Activated CD4-positive, alpha-beta memory T cell treated with anti-CD3 and anti-CD28 coated beads, Interleukin-2, amount 10 ng/mL, durations not matched to agents 7 days and 5 days (primary cell): ENCODE measurements at regions of chr22 and their contacts with region 1.

Region 1: DNA sequence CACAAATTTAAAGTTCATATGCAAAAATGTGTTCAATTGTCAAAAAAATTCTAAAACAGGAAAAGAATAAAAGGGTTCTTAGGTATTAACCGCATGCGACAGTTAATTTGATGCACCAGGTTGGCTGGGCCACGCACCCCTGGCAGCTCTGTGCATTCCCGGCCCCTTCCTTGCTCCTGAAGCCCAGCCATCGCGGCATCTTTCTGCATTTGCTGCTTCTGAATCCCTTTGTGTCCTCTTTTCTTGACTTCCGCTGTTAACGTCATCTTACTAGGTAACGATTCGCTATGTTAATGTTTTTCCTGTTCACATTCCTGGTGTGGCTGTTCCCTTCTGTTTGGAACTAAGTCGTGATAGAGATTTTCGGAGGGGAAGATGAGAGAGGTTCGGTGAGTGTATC is 7.9 kb upstream of the KLHDC7B start:
- DNase-seq: no peak
- H3K4me3 Mint-ChIP-seq: peak overlapping the region; percentile 33
- H3K27ac Mint-ChIP-seq: peak overlapping the region; percentile 99
- H3K4me1 Mint-ChIP-seq: peaks cover 83% of the 10 kb centered on the region
- H3K27me3 Mint-ChIP-seq: no peaks in the 10 kb centered on the region

Region 2: DNA sequence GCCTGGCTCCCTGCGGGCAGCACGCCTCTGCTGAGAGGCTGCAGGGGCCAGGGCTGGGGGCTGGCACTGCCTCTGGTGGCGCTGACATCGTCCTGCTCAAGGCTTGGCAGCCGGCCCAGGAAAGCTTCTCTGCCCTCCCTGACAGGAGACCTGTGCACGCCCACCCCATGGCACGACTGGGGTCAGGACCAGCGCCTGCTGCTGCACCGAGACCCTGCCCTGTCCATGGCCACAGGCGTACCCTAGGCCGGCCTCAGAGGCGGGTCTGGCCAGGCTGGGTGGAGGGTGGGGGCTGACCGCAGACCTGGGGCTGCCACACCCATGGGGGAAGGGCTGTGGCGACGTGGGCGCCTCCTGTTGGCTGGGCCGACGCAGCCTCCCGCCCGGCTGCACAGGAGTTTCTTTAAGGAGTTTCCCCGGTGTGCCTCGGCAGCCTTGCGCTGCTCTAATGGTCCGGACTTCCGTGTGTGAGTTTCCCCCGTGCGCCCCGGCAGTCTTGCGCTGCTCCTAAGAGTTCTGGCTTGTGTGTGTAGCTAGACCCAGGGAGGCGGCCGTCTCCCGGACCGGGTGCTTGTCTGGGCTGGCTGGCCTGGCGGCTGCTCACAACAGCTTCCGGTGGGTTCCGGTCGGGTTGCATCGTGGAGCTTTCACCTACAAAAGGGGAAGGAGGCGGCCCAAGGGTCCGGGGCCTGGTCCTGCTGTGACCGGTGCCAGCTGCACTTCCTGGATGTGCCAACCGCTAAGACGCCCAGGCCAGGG is 347.4 kb before region 1 on chr22:
- CTCF ChIA-PET with region 1: no interaction called
- POLR2A ChIA-PET with region 1: interaction called, 11 read pairs
- DNase-seq: peak; percentile 87
- H3K4me3 Mint-ChIP-seq: peak overlapping the region; percentile 79
- H3K27ac Mint-ChIP-seq: peak overlapping the region; percentile 95
- H3K4me1 Mint-ChIP-seq: peaks cover 57% of the 10 kb centered on the region
- H3K27me3 Mint-ChIP-seq: no peaks in the 10 kb centered on the region

Region 3: DNA sequence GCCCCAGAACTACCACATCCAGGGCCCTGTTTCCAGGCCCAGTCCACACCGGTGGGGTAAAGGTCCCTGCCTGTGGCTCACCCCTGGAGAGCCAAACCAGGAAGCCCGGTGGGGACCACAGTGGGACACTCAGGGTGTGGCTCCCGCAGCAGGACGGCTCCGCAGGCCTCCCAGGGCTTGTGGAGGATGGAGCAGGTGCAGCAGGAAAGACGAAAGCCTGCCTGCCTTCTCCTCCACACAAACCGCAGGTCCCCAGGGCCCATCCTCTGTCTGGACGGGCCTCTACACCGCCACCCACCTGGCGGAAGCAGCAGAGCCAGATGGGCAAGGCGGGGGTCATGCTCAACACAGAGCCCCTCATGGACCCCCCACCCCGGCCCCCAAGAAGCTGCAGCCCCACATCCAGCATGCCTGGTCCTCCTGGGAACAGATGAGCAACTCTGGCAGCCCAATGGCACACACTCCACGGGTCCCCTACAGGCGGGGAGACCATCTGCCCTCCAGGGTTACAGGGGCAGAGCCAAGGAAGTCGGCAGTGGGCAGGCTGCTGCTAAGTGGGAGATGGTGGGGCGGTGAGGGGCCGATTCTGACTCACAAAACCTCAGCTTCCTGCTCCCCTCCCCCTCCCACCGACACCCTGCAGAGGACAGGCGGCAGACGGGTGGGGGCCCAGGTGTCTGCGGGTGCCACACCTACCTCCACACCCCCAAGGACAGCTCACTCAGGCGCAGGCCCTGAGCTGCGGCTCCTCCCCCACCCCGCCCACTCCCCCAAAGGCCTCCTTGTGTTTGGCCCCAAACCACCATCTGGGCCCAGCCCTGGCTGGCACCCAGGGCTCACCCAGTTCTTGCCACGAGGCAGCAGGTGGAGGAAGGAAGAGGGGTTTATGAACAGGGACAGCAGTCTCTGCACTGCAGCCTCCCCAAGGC is 68.1 kb before region 1 on chr22:
- CTCF ChIA-PET with region 1: interaction called, 3 read pairs
- POLR2A ChIA-PET with region 1: interaction called, 16 read pairs
- DNase-seq: peak; percentile 99
- H3K4me3 Mint-ChIP-seq: peak overlapping the region; percentile 68
- H3K27ac Mint-ChIP-seq: peak overlapping the region; percentile 97
- H3K4me1 Mint-ChIP-seq: peaks cover 67% of the 10 kb centered on the region
- H3K27me3 Mint-ChIP-seq: no peaks in the 10 kb centered on the region

Region 4: DNA sequence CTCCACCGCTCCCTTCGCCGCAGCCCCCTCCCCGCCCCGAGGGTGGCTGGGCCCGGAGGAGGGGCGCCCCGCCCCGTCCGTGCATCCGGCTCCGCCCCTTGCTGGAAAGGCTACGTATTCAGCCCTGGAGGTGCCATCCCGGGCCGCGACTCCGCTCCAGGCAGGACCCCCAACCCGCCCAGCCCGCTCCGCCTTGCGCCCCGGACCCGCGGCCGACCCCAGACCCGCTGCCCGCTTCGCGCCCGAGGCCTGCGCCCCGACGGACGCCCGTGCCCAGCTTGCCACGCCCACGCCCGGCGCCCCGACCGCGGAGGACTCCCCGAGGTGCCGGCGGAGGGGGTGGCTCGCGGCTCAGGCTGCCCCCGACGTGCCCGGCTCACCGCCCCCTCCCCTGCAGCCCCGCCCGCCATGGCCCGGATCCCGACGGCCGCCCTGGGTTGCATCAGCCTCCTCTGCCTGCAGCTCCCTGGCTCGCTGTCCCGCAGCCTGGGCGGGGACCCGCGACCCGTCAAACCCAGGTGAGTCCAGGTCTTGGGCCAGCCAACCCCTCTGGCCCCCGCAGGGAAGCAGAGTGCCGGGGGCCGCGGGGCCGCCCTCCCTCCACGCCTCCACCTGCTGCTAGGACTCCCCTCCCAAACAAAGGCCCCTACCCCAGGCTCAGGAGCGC is 56.2 kb before region 1 on chr22 and contains the start of gene ADM2:
- CTCF ChIA-PET with region 1: no interaction called
- POLR2A ChIA-PET with region 1: no interaction called
- DNase-seq: peak; percentile 75
- H3K4me3 Mint-ChIP-seq: peak within 1 kb of the TSS; percentile 76
- H3K27ac Mint-ChIP-seq: no peak within 1 kb of the TSS
- H3K4me1 Mint-ChIP-seq: peaks cover 8% of the 10 kb centered on the region
- H3K27me3 Mint-ChIP-seq: peaks cover 9% of the 10 kb centered on the region
- total RNA-seq, gene ADM2: 7.6 to 8.8 TPM

Region 5: GRCh38 chr22:50582562-50583293 is 45.0 kb after region 1 on chr22 and contains the start of gene CHKB:
- CTCF ChIA-PET with region 1: no interaction called
- POLR2A ChIA-PET with region 1: interaction called, 30 read pairs
- DNase-seq: peak; percentile 99
- H3K4me3 Mint-ChIP-seq: peak within 1 kb of the TSS; percentile 81
- H3K27ac Mint-ChIP-seq: peak within 1 kb of the TSS; percentile 93
- H3K4me1 Mint-ChIP-seq: peaks cover 34% of the 10 kb centered on the region
- H3K27me3 Mint-ChIP-seq: no peaks in the 10 kb centered on the region
- total RNA-seq, gene CHKB: 101 to 111 TPM

Region 6: DNA sequence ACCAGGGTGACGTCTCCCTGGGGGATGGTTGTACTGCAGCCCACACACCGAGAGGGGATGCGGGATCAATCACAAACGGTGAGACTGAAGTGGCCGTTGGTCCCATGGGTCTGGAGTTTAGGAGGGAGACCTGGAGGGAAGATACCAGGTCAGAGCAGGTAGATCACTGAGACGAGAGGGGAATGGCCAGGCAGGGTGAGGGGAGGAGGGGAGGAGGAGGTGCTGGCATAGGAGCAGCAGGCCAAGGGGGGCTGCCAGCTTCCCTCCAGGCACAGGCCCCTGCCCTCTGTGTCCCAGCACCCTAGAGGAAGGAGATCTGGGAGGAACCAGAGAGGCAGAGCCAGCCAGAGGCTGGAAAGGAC is 69.9 kb after region 1 on chr22:
- CTCF ChIA-PET with region 1: no interaction called
- POLR2A ChIA-PET with region 1: no interaction called
- DNase-seq: no peak
- H3K4me3 Mint-ChIP-seq: no peak overlapping the region
- H3K27ac Mint-ChIP-seq: no peak overlapping the region
- H3K4me1 Mint-ChIP-seq: peaks cover 3% of the 10 kb centered on the region
- H3K27me3 Mint-ChIP-seq: peaks cover 38% of the 10 kb centered on the region

Region 7: GRCh38 chr22:50733521-50734342 is 196.0 kb after region 1 on chr22:
- CTCF ChIA-PET with region 1: no interaction called
- POLR2A ChIA-PET with region 1: no interaction called
- DNase-seq: no peak
- H3K4me3 Mint-ChIP-seq: no peak overlapping the region
- H3K27ac Mint-ChIP-seq: no peak overlapping the region
- H3K4me1 Mint-ChIP-seq: peaks cover 2% of the 10 kb centered on the region
- H3K27me3 Mint-ChIP-seq: peaks cover 12% of the 10 kb centered on the region